Astrocyte of the cerebellum (primary cell): ENCODE measurements at regions of chr4 and their contacts with region 1.

Region 1: DNA sequence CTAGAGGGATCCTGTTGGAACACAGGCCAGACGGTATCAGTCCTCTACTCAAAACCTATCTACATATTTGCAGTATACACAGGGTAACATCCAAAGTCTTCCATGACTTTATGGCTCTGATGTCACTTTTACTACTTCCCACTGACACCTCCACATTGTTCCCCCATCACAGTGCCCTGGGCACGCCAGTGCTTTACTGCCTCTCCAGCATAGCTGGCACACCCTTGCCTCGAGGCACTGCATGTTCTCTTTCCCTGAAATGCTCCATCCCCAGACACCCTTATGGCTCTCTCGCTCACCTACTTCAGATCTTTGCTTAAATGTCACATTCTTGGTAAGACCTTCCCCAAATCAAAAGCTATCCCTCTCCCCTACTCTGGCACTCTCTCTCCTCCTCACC is 6.3 kb upstream of the ATP10D start:
- DNase-seq: no peak
- H3K4me3 ChIP-seq: no peak overlapping the region
- CTCF ChIP-seq: no peak

Region 2: DNA sequence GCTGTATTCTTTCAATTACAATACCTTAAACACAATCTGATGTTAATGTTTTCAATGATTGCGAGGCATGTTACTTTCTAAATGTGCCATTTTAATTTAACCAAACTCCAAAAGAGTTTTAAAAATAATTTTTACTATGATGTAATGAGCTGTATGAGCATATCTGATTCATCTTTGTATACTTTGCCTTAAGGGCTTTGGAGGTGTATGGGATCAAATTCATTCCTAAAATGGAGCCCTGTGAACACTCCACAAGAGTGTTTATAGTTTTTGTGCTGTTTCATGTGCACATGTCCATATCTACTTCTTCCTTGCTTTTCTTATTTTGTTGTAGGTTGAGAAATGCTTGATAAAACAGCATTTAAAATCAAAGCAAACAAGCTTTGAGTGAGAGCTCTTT is 88.7 kb after region 1 on chr4:
- in situ Hi-C with region 1: loop called (anchors 5 kb)
- DNase-seq: no peak
- H3K4me3 ChIP-seq: no peak overlapping the region
- CTCF ChIP-seq: no peak

Region 3: DNA sequence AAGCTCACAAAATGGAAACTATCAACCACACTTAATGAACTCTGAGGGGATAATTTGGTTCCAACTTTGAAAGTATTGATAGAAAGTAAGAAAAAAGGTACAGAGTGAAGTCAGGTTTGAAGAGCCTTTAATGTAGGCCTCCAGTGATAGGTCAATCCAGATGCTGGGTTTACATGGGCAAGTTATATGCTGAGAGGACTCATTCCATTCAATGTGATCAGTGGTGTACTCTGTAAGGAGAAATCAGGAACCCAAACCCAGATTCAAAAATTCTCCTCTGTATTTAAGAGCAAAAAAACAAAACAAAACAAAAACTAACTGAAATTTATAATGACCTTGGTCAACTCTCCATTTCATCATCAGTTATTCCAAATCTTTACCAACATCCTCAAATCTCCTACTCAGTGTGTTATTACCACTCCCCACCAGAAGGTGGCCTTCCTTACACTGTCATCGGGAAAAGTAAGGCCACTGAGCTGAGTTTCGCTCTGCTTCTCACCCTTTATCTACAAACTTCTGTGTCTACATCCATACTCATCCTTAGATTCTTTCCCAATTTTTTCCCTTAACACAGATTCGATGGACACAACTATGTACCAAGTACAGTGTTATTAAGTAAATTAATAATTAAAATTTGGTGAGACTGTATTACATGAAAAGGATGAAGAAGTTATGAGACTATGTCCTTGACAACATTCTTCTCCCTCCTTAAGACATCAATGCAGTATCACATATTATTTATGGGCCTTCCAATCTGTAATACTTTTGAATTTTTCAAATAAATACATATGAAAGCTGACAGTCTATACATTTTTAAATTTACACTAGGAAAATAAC is 1099.5 kb after region 1 on chr4:
- in situ Hi-C with region 1: no loop called
- DNase-seq: peak; percentile 63
- H3K4me3 ChIP-seq: no peak overlapping the region
- CTCF ChIP-seq: peak; percentile 82